K562 (cell line): ENCODE measurements at regions of chr9 and their contacts with region 1.

Region 1: GRCh38 chr9:97632985-97633858 is at the starts of genes NCBP1 and TSTD2:
- DNase-seq: peak; percentile 91 to 98 (median 93)
- ATAC-seq: peak; percentile 92
- H3K4me3 ChIP-seq: peak within 1 kb of the TSS; percentile 76
- H3K27ac ChIP-seq: peak within 1 kb of the TSS; percentile 98
- H3K4me1 ChIP-seq: peaks cover 4 to 24% of the 10 kb centered on the region in 2 experiments; a peak in 3 of 5 replicates
- H3K27me3 ChIP-seq: no peaks in the 10 kb centered on the region
- CTCF ChIP-seq: no peak
- EP300 ChIP-seq: peak; percentile 24
- POLR2A ChIP-seq: peak; percentile 84
- RAD21 ChIP-seq: no peak
- polyA plus RNA-seq, gene NCBP1: 29.4 to 37.1 TPM
- polyA plus RNA-seq, gene TSTD2: 10.1 to 19.0 TPM

Region 2: GRCh38 chr9:97645720-97646119 is 12.5 kb after region 1 on chr9:
- CTCF ChIA-PET with region 1: interaction called, 4 read pairs
- POLR2A ChIA-PET with region 1: interaction called, 18 read pairs
- in situ Hi-C with region 1: no loop called
- intact Hi-C with region 1: no loop called
- DNase-seq: no peak
- ATAC-seq: no peak
- H3K4me3 ChIP-seq: no peak overlapping the region
- H3K27ac ChIP-seq: no peak overlapping the region
- H3K4me1 ChIP-seq: no peaks in the 10 kb centered on the region
- H3K27me3 ChIP-seq: no peaks in the 10 kb centered on the region
- CTCF ChIP-seq: no peak
- EP300 ChIP-seq: no peak
- POLR2A ChIP-seq: no peak
- RAD21 ChIP-seq: no peak

Region 3: GRCh38 chr9:97675655-97676054 is 42.4 kb after region 1 on chr9:
- CTCF ChIA-PET with region 1: no interaction called
- POLR2A ChIA-PET with region 1: no interaction called
- in situ Hi-C with region 1: no loop called
- intact Hi-C with region 1: no loop called
- DNase-seq: no peak
- ATAC-seq: no peak
- H3K4me3 ChIP-seq: no peak overlapping the region
- H3K27ac ChIP-seq: no peak overlapping the region
- H3K4me1 ChIP-seq: no peaks in the 10 kb centered on the region
- H3K27me3 ChIP-seq: no peaks in the 10 kb centered on the region
- CTCF ChIP-seq: no peak
- EP300 ChIP-seq: no peak
- POLR2A ChIP-seq: no peak; the same call in 1 of the 2 replicates
- RAD21 ChIP-seq: no peak

Region 4: DNA sequence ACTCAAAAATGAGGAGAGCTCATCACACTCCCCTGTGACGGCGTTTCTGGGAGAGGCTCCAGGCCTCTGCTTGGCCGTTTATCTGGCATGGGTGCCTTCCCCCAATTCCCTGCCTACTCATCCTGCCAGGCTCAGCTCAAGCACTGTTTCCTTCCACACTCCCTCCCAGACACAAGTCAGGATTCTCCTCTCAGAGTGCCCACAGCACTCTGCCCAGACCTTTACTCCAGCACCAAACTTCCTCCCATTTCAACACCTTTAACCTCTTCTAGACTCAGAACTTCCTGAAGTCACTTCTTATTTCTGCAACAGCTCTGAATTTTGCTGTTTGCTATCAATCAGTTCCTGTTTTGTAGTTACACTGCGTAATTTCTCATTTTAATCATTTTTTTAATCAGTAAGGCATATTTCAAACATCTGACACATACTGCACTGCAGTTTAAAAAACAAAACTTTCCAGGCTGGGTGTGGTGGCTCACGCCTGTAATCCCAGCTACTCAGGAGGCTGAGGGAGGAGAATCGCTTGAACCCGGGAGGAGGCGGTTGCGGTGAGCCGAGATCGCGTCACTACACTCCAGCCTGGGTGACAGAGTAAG is 273.1 kb after region 1 on chr9:
- CTCF ChIA-PET with region 1: no interaction called
- POLR2A ChIA-PET with region 1: no interaction called
- in situ Hi-C with region 1: no loop called
- intact Hi-C with region 1: no loop called
- DNase-seq: no peak
- ATAC-seq: no peak
- H3K4me3 ChIP-seq: no peak overlapping the region
- H3K27ac ChIP-seq: no peak overlapping the region
- H3K4me1 ChIP-seq: no peaks in the 10 kb centered on the region; a peak in 2 of 5 replicates
- H3K27me3 ChIP-seq: no peaks in the 10 kb centered on the region
- CTCF ChIP-seq: no peak
- EP300 ChIP-seq: no peak
- POLR2A ChIP-seq: no peak
- RAD21 ChIP-seq: no peak